Dendritic cell treated with granulocyte-macrophage colony-stimulating factor and Interleukin-4, amounts not matched to agents 40 ng/mL and 50 ng/mL, for 4 days (primary cell): ENCODE measurements at regions of chrX and their contacts with region 1.

Region 1: DNA sequence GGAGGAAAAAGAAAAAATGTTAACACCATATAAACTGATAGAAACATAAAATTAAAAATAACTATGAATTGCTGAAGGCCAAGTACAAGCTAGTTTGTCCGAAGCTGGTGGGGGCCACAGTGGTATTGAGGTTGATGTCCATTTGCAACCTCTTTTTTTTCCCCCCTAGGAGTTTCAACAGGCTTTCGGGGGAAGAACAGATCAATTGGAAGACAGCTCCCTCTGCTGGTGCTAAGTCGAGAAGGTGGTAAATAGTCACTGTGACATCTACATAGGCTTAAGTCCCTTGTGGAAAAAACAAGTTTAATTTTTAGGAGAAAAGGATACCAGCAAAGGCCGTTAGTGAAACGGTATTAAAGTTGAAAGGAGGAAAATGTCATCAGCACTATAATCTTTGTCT is 115.7 kb upstream of the ZXDA start:
- H3K4me3 Mint-ChIP-seq: no peak overlapping the region
- H3K27ac Mint-ChIP-seq: no peak overlapping the region
- H3K4me1 Mint-ChIP-seq: no peaks in the 10 kb centered on the region
- H3K27me3 Mint-ChIP-seq: no peaks in the 10 kb centered on the region

Region 2: DNA sequence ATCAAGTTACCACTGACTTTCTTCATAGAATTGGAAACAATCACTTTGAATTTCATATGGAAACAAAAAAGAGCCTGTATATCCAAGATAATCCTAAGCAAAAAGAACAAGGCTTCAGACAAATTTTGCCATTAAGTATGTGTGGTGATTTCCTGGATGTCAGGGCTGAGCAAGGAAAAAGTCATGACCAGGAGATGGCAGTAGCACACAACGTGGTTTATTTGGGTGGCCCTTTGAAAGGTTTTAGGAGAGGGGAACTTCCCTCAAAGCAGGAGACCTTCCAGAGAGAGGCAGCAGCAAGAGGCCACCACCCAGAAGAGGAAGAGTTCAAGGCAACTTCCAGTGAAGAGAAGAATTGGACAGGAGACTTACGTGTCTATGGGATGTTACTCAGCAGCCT is 452.2 kb before region 1 on chrX:
- intact Hi-C with region 1: loop called (anchors 5 kb)
- H3K4me3 Mint-ChIP-seq: no peak overlapping the region
- H3K27ac Mint-ChIP-seq: no peak overlapping the region
- H3K4me1 Mint-ChIP-seq: peaks cover 5% of the 10 kb centered on the region
- H3K27me3 Mint-ChIP-seq: peaks cover 3% of the 10 kb centered on the region

Region 3: DNA sequence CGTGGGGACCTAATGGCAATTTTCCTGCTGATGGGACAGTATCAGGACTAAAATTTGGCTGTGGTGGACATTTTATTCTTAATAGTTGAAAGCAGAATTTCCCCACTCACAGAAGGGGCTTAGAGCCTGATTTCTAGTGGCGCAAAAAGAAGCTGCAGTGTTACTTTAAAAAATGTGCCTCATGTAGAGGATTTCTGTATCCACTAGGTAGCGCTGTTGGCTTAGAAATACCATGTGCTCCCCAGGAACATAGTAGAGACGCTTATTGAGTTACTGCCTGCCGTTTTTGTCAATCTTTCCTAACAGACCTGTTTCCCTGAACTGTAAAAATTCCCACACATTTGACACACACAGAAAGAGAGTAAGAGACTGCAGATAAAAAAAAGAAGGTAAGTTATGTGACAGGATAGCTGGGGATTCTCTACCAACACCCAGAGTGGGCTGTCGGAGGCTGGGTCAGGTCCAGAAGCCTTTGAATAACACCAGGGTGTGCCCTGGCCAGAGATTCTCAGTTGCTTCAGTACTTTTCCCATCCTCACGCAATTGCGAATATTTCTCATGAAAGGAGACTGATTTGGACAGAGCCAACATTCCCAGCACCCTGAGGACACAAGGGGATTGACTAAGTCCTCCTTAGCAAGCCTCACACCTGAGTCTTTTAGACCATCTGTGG is 204.1 kb before region 1 on chrX:
- intact Hi-C with region 1: loop called (anchors 1 kb)
- H3K4me3 Mint-ChIP-seq: no peak overlapping the region
- H3K27ac Mint-ChIP-seq: no peak overlapping the region
- H3K4me1 Mint-ChIP-seq: no peaks in the 10 kb centered on the region
- H3K27me3 Mint-ChIP-seq: peaks cover 2% of the 10 kb centered on the region